ENCODE measurements at regions of chr6 and their contacts with region 1.

Region 1: GRCh38 chr6:133191323-133191722 is 49.8 kb upstream of the EYA4 start:
- DNase-seq: no peak
- H3K4me3 ChIP-seq: no peak overlapping the region
- H3K27ac ChIP-seq: no peak overlapping the region
- H3K4me1 ChIP-seq: 0 out of 7 replicates have a peak, but pooled peaks cover 0 to 2% (median 0%) of the 10 kb centered on the region in 4 experiments
- H3K27me3 ChIP-seq: no peaks in the 10 kb centered on the region
- CTCF ChIP-seq: no peak
- EP300 ChIP-seq: no peak
- POLR2A ChIP-seq: no peak
- RAD21 ChIP-seq: no peak

Region 2: GRCh38 chr6:133070410-133071043 is 120.8 kb before region 1 on chr6:
- CTCF ChIA-PET with region 1: no interaction called
- POLR2A ChIA-PET with region 1: no interaction called
- DNase-seq: no peak
- H3K4me3 ChIP-seq: no peak overlapping the region
- H3K27ac ChIP-seq: no peak overlapping the region
- H3K4me1 ChIP-seq: no peaks in the 10 kb centered on the region
- H3K27me3 ChIP-seq: no peaks in the 10 kb centered on the region
- CTCF ChIP-seq: no peak
- EP300 ChIP-seq: no peak
- POLR2A ChIP-seq: no peak
- RAD21 ChIP-seq: no peak

Region 3: GRCh38 chr6:133099573-133099972 is 91.8 kb before region 1 on chr6:
- CTCF ChIA-PET with region 1: no interaction called
- POLR2A ChIA-PET with region 1: no interaction called
- DNase-seq: no peak
- H3K4me3 ChIP-seq: no peak overlapping the region
- H3K27ac ChIP-seq: no peak overlapping the region
- H3K4me1 ChIP-seq: 0 out of 7 replicates have a peak, but pooled peaks cover 0 to 2% (median 0%) of the 10 kb centered on the region in 4 experiments
- H3K27me3 ChIP-seq: no peaks in the 10 kb centered on the region
- CTCF ChIP-seq: no peak
- EP300 ChIP-seq: no peak
- POLR2A ChIP-seq: no peak
- RAD21 ChIP-seq: no peak

Region 4: DNA sequence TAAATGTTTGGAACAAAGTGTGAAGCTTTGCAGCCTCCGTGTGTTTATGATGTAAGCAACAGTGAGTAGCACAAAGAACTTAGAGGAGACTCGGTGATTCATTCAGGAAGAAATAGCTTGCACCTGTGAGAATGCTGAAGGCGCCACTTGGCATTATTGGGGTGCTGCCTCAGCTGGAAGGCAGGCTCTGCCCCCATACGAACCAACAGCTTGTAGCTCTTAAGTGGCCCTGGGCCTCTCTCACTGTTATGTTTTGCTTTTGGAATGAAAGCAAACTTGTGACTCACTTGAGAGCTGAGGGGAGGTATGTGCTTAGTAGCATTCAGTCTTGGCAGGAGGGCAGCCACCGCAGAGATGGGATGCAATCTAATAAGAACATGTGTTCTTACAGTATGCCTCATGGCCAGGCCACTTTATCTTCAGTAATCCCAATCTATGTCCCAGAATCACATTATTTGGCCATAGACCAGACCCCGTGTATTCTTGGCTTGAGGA is 360.6 kb after region 1 on chr6:
- CTCF ChIA-PET with region 1: interaction called, 13 read pairs
- POLR2A ChIA-PET with region 1: no interaction called
- DNase-seq: no peak
- H3K4me3 ChIP-seq: no peak overlapping the region
- H3K27ac ChIP-seq: no peak overlapping the region
- H3K4me1 ChIP-seq: peaks cover 7 to 17% (median 12%) of the 10 kb centered on the region in 4 experiments
- H3K27me3 ChIP-seq: no peaks in the 10 kb centered on the region
- CTCF ChIP-seq: no peak
- EP300 ChIP-seq: no peak
- POLR2A ChIP-seq: no peak
- RAD21 ChIP-seq: no peak